Body of pancreas (tissue), 4 donors: ENCODE measurements at regions of chr17 and their contacts with region 1.

Region 1: GRCh38 chr17:2592971-2593820 is at the start of gene PAFAH1B1:
- DNase-seq: peak; percentile 93 to 94 (median 94)
- ATAC-seq: peak; percentile 94
- H3K4me3 ChIP-seq: peak within 1 kb of the TSS; percentile 67 to 80
- H3K27ac ChIP-seq: peak within 1 kb of the TSS; percentile 93 to 98 (median 97)
- H3K4me1 ChIP-seq: peaks cover 39% of the 10 kb centered on the region
- H3K27me3 ChIP-seq: no peaks in the 10 kb centered on the region
- CTCF ChIP-seq: peak in 1 of 7 experiments; percentile 48
- POLR2A ChIP-seq: peak; percentile 74 to 86 (median 80)
- total RNA-seq, gene PAFAH1B1: 39.7 to 60.3 TPM

Region 2: DNA sequence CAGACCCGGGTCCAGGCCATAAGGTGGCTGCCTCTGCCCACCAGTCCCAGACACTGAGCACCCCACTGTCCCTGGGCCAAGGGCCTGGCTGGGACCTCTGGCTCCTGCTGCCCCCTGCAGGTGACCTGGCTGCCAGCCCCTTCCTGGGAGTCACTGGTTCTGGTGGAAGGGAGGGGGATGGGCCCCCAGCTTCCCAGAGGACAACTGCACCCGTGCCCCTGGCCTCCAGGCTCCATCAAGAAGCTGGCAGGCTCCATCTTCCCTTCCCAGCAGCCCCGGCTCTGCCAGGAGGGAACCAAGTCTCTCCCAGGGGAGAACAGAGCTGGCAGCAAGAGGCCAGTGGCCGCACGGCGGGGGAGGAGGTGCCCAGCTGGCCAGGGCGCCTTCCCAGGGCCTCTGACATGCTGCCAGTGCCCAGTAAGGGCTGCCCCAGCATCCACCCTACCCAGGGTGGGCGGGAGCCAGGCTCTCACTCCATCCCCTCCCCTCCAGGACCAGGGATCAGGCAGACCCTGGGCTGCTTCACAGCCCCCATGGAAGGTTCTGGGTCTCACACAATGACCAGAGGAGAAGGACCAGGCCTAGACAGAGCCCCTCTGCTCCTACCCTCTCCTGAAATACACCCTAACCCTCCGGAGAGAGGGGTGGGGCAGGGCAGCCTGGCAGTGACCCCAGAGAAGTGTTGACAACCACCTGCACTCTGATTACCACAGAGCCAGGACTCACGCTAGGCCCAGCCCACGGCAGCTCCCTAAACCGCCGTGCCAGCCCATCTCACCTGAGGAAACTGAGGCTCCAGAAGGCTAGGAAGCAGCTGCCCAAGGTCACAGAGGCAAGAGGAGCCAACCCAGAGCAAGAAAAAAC is 114.8 kb after region 1 on chr17:
- intact Hi-C with region 1: loop called (anchors 10 kb)
- DNase-seq: peak; percentile 65 to 74 (median 68)
- ATAC-seq: no peak
- H3K4me3 ChIP-seq: no peak overlapping the region
- H3K27ac ChIP-seq: peak overlapping the region; percentile 32 to 93 (median 88)
- H3K4me1 ChIP-seq: peaks cover 63% of the 10 kb centered on the region
- H3K27me3 ChIP-seq: no peaks in the 10 kb centered on the region
- CTCF ChIP-seq: peak; percentile 21 to 61 (median 50)
- POLR2A ChIP-seq: no peak

Region 3: DNA sequence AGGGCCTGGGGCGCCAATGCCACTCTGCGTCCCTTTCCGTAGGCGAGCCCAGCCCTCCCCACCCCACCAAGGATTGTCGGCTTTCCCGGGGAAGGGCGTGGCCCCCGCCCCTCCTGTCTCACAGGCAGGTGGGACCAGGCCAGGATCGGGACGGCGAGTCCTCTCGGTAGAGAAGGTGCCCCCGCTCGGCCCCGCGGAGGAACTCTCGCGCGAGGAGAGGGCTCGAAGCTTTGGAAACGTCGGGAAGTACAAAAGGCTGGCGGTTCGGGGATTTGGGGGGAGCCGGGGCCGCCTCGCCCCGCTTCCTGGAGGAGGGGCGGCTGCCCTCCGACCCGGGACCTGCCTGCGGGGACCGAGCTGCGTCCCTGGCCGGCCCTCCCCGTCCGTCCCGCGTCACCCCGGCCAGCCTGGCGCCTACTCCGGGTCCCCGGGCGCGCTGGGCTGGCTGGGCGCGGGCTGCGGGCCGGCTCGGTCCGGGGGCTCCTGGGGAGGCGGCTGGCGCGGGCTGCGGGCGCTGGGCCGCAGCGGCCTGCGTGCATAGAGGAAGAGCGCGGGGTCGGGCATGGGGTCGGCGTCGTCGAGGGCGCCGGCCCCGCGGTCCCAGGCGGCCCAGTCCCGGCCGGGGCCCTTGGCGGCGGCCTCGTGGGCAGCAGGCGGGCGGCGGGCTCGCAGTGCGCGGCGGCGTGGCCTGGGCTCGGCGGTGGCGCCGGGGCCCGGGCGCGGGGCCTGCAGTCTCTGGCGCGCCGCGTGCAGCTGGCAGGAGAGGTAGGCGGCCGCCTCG is 131.0 kb after region 1 on chr17:
- intact Hi-C with region 1: no loop called
- DNase-seq: no peak
- ATAC-seq: peak; percentile 36
- H3K4me3 ChIP-seq: no peak overlapping the region
- H3K27ac ChIP-seq: no peak overlapping the region
- H3K4me1 ChIP-seq: peaks cover 5% of the 10 kb centered on the region
- H3K27me3 ChIP-seq: peaks cover 0 to 11% of the 10 kb centered on the region in 2 donors
- CTCF ChIP-seq: no peak
- POLR2A ChIP-seq: no peak